PC-3 (cell line): ENCODE measurements at regions of chr10 and their contacts with region 1.

Region 1: GRCh38 chr10:33559105-33559504 is 224.6 kb upstream of the NRP1 start:
- DNase-seq: peak; percentile 100
- ATAC-seq: peak; percentile 100
- H3K4me3 ChIP-seq: no peak overlapping the region
- H3K27ac ChIP-seq: no peak overlapping the region
- H3K4me1 ChIP-seq: peaks cover 13% of the 10 kb centered on the region
- H3K27me3 ChIP-seq: no peaks in the 10 kb centered on the region
- CTCF ChIP-seq: peak; percentile 41; the same call in 1 of the 2 replicates

Region 2: GRCh38 chr10:33453081-33454025 is 105.8 kb before region 1 on chr10:
- CTCF ChIA-PET with region 1: no interaction called
- POLR2A ChIA-PET with region 1: no interaction called
- intact Hi-C with region 1: loop called (anchors 5 kb)
- DNase-seq: peak; percentile 100
- ATAC-seq: peak; percentile 93
- H3K4me3 ChIP-seq: peak overlapping the region; percentile 2; the same call in 1 of the 2 replicates
- H3K27ac ChIP-seq: peak overlapping the region; percentile 61
- H3K4me1 ChIP-seq: peaks cover 20% of the 10 kb centered on the region
- H3K27me3 ChIP-seq: no peaks in the 10 kb centered on the region
- CTCF ChIP-seq: no peak

Region 3: GRCh38 chr10:34139559-34139958 is 580.5 kb after region 1 on chr10:
- CTCF ChIA-PET with region 1: no interaction called
- POLR2A ChIA-PET with region 1: no interaction called
- intact Hi-C with region 1: loop called (anchors 2 kb)
- DNase-seq: peak; percentile 42
- ATAC-seq: no peak
- H3K4me3 ChIP-seq: no peak overlapping the region
- H3K27ac ChIP-seq: no peak overlapping the region
- H3K4me1 ChIP-seq: peaks cover 23% of the 10 kb centered on the region
- H3K27me3 ChIP-seq: no peaks in the 10 kb centered on the region
- CTCF ChIP-seq: no peak